ENCODE measurements at regions of chr11 and their contacts with region 1.

Region 1: DNA sequence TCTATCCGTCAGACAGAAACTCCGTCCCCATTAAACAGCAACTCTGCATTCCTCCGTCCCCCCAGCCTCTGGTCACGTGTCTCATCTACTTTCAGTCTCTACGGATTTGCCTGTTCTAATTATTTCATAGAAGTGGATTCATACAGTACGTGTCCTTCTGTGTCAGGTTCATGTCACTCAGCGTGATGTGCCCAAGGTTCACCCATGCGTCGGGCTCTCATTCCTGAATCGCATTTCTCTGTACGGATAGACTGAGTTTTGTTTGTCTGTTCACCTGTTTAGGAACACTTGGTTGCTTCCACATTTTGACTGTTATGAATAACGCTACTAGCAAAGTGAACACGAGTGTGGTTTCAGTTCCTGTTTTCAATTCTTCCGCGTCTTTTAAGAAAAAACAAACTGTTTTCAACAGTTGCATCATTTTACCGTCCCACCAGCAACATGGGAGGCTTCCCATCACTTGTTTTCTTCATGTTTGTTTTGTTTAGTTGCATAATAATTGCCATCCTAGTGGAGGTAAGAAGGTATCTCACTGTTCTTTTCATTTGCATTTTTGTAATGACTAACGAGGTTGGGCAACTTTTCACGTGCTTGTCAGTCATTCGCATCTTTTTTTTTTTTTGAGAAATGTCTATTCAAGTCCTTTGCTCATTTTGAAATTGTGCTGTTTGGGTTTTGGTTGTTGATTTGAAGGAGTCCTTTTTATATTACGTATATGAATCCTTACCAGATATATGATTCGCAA is 8.9 kb upstream of the NLRP6 start:
- DNase-seq: peak; percentile 72
- ATAC-seq: peak; percentile 71
- H3K4me3 Mint-ChIP-seq: peak overlapping the region; percentile 79
- H3K27ac Mint-ChIP-seq: peak overlapping the region; percentile 99
- H3K4me1 Mint-ChIP-seq: peaks cover 43% of the 10 kb centered on the region
- H3K27me3 Mint-ChIP-seq: no peaks in the 10 kb centered on the region

Region 2: GRCh38 chr11:279966-280582 is 10.8 kb after region 1 on chr11:
- CTCF ChIA-PET with region 1: interaction called, 4 read pairs
- POLR2A ChIA-PET with region 1: no interaction called
- intact Hi-C with region 1: loop called in 1 of 2 experiments (anchors 1 kb)
- DNase-seq: peak; percentile 72
- ATAC-seq: peak; percentile 69
- H3K4me3 Mint-ChIP-seq: peak overlapping the region; percentile 58
- H3K27ac Mint-ChIP-seq: no peak overlapping the region
- H3K4me1 Mint-ChIP-seq: peaks cover 44% of the 10 kb centered on the region
- H3K27me3 Mint-ChIP-seq: peaks cover 21% of the 10 kb centered on the region

Region 3: DNA sequence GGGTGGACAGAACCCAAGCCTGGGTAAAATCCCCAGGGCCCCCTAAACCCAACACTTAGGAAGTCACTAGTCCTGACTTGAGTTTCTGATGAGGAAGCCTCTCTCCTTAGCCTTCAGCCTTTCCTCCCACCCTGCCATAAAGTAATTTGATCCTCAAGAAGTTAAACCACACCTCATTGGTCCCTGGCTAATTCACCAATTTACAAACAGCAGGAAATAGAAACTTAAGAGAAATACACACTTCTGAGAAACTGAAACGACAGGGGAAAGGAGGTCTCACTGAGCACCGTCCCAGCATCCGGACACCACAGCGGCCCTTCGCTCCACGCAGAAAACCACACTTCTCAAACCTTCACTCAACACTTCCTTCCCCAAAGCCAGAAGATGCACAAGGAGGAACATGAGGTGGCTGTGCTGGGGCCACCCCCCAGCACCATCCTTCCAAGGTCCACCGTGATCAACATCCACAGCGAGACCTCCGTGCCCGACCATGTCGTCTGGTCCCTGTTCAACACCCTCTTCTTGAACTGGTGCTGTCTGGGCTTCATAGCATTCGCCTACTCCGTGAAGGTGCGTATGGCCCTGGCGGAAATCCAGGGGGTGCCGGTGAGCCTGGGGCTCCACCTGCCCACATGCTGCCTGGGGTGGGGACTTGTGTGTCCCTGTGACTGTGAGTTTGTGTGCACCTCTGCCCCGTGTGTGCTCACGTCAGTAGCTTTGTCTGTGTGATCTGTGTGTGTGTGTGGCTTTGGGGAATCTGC is 44.6 kb after region 1 on chr11 and contains the start of gene IFITM1:
- CTCF ChIA-PET with region 1: interaction called, 7 read pairs
- POLR2A ChIA-PET with region 1: no interaction called
- intact Hi-C with region 1: loop called (anchors 1 to 2 kb)
- DNase-seq: peak; percentile 78
- ATAC-seq: peak; percentile 40
- H3K4me3 Mint-ChIP-seq: peak within 1 kb of the TSS; percentile 95
- H3K27ac Mint-ChIP-seq: peak within 1 kb of the TSS; percentile 99
- H3K4me1 Mint-ChIP-seq: peaks cover 29% of the 10 kb centered on the region
- H3K27me3 Mint-ChIP-seq: no peaks in the 10 kb centered on the region
- total RNA-seq, gene IFITM1: 248 to 285 TPM

Region 4: DNA sequence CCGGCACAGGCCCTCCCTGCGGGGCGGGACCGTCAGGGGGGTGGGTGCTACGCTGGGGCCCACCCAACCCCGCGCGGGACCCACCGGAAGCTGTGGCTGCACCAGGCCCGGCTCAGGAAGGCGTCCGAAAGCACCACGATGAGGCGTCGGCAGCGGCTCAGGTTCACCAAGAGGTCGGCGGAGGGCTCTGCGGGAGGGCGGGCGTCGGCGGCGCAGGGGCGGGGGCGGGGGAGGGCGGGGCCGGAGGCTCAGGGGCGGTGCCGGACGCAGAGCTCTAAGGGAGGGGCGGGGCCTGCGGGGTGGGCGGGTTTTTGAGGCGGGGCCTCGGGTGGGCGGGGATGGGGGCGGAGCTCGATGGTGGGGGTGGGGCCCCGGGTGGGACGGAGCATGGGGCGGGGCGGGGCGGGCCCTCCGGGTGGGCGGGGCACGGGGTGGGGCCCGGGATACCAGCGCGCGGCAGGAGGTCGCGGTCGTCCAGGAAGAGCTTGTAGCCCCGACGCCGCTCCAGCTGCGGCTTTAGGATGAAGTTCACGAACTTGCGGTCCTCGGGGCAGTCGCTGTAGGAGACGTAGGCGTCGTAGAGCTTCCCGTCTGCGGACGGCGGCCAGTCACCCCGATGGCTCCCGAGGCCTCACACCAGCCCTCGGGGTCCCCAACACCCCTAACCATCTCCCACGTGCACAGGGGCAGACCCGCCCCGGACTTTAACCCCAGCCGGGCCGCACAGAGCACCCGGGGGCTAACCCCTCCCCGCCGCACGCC is 137.8 kb after region 1 on chr11:
- CTCF ChIA-PET with region 1: interaction called, 3 read pairs
- POLR2A ChIA-PET with region 1: no interaction called
- intact Hi-C with region 1: loop called in 1 of 2 experiments (anchors 1 kb)
- DNase-seq: peak; percentile 93
- ATAC-seq: peak; percentile 90
- H3K4me3 Mint-ChIP-seq: no peak overlapping the region
- H3K27ac Mint-ChIP-seq: no peak overlapping the region
- H3K4me1 Mint-ChIP-seq: peaks cover 5% of the 10 kb centered on the region
- H3K27me3 Mint-ChIP-seq: no peaks in the 10 kb centered on the region

Measured in activated CD4-positive, alpha-beta T cell treated with anti-CD3 and anti-CD28 coated beads for 36 hours (primary cell).